ENCODE measurements at regions of chr14 and their contacts with region 1.

Region 1: DNA sequence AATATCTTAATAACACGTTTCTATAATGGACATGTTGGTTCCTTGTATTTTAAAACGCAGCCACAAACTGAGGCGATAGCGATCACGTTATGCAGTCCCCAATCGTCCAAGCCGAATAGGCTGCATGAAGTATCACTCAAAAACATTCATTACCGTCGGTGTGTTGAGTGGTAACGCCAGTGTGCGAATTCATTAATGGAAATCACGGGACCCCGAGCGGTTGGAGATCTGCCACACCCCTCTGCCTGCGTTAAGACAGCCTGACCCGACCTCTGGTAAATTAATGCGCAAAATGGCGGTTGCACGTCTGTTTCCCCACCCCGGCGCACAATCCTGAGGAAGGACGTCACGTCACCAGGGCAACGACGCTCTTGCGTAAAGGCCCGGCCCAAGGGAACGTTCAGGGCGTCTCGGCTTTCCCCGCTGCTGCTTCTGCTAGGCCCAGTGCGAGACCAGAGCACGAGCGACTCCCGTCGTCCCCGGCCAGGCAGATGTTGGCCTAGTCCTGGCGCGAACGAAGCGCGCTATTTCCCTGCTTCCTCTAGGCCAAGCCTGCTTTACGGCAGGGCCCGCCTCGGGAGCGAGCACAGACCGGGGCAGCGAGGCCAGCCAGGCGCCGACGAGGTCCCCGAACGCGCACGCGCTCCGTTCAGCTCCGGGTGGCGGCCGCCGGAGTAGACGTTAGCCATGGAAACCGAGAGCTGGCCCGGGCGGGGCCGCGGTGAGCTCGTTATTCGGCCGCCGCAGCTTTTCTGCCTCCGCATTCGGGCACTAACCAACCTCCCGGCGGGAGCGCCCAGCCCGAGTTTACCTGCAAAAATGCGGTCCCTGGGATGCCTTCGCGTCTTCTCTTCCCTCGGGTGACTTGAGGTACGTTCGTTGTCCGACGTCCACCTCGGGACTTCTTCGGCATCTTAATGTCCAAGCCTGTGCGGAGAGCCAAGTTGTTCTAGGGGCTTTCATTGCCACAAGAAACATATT is at the start of gene PCNX4:
- DNase-seq: peak; percentile 90
- H3K4me3 Mint-ChIP-seq: peak within 1 kb of the TSS; percentile 98
- H3K27ac Mint-ChIP-seq: peak within 1 kb of the TSS; percentile 98
- H3K4me1 Mint-ChIP-seq: peaks cover 34% of the 10 kb centered on the region
- H3K27me3 Mint-ChIP-seq: peaks cover 2% of the 10 kb centered on the region
- total RNA-seq, gene PCNX4: 41.6 and 46.7 TPM in 2 replicates

Region 2: DNA sequence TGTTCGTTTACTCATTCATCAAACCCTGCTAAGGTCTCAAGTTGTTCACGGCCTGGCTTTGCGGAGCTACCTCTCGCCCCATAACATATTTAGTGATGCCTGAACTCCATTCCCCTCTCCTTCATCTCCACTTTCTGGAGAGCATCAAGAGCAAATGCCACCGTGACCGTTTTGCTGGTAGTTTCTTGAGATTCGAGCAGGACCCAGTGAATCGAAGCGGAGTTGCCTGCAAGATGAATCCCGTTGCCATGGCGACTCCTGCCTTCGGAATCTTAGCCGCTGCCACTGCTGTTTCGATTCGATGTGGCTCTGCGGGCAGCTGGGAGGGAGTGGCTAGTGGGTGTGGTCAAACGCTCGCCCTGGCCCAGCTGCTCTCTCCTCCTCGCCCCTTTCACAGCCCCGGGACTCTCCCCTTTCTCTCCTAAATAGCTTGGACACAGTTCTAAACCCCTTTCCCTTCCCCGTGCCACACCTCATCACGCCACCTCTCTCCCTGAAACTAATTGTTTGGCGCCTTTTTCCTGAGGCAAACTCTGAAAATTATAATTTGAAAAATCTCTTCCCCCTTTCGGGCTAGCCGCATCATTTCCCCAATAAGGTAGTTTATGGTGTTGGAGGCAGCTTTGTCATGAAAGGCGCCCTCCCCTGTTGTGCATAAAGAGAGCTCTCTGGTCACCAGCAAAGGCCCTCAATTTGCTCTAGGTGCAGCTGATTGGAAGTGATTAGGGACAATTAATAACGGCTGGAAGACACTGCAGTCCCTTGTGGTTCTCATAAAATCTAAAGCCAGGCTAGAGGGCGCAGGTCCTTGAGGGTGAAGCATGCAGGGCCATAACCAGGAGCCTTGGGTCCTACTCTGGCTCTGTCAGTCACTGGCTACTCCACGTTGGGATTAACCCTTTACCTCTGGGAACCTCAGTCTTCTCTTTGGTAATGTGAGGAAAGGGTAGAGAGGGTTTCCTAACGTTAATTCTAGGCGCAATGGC is 901.8 kb before region 1 on chr14:
- intact Hi-C with region 1: loop called (anchors 5 kb)
- DNase-seq: peak; percentile 73
- H3K4me3 Mint-ChIP-seq: peak overlapping the region; percentile 96
- H3K27ac Mint-ChIP-seq: peak overlapping the region; percentile 87
- H3K4me1 Mint-ChIP-seq: peaks cover 11% of the 10 kb centered on the region
- H3K27me3 Mint-ChIP-seq: peaks cover 17% of the 10 kb centered on the region

Region 3: DNA sequence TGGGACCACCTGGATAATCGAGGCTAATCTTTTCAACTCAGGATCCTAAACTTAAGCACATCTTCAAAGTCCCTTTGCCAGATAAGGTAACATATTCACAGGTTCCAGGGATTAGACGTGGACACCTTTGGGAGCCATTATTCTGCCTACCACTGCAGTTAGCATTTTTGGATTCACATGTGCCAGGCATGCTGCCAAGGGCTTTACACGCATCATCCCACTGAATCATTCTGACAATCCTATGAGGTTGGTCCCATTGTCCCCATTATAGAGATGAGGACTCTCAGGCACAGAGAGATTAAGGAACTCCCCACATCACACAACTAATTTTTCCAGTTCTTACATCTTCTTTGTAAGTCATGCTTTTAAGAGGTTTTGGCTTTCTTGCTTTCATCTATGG is 255.7 kb before region 1 on chr14:
- intact Hi-C with region 1: no loop called
- DNase-seq: no peak
- H3K4me3 Mint-ChIP-seq: no peak overlapping the region
- H3K27ac Mint-ChIP-seq: no peak overlapping the region
- H3K4me1 Mint-ChIP-seq: no peaks in the 10 kb centered on the region
- H3K27me3 Mint-ChIP-seq: no peaks in the 10 kb centered on the region

Region 4: DNA sequence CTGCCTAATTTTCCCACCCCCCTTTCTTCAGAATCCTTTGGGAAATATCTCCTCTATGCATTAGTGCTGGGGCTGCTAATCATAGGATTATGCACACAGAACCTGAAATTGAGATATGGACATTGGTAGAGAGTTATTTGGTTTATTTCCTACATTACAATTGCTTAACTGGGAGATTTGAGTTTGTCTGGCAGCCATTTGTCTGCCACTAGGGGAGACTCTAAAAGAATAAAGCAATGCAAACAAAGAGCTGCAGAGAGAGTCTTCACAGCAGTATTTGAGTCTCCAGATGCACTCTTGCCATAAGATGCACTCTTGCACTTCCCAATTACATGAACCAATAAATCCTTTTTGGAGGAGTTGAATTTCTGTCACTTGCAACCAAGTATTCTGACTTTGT is 12.1 kb before region 1 on chr14:
- intact Hi-C with region 1: no loop called
- DNase-seq: no peak
- H3K4me3 Mint-ChIP-seq: no peak overlapping the region
- H3K27ac Mint-ChIP-seq: no peak overlapping the region
- H3K4me1 Mint-ChIP-seq: no peaks in the 10 kb centered on the region
- H3K27me3 Mint-ChIP-seq: peaks cover 22% of the 10 kb centered on the region

Region 5: GRCh38 chr14:60151715-60152114 is 59.9 kb after region 1 on chr14:
- intact Hi-C with region 1: loop called (anchors 1 kb)
- DNase-seq: peak; percentile 50
- H3K4me3 Mint-ChIP-seq: peak overlapping the region; percentile 26
- H3K27ac Mint-ChIP-seq: peak overlapping the region; percentile 87
- H3K4me1 Mint-ChIP-seq: peaks cover 42% of the 10 kb centered on the region
- H3K27me3 Mint-ChIP-seq: no peaks in the 10 kb centered on the region

Region 6: GRCh38 chr14:60248697-60249318 is 157.0 kb after region 1 on chr14 and contains the start of gene PPM1A:
- intact Hi-C with region 1: loop called (anchors 1 kb)
- DNase-seq: peak; percentile 90
- H3K4me3 Mint-ChIP-seq: peak within 1 kb of the TSS; percentile 96
- H3K27ac Mint-ChIP-seq: peak within 1 kb of the TSS; percentile 100
- H3K4me1 Mint-ChIP-seq: peaks cover 59% of the 10 kb centered on the region
- H3K27me3 Mint-ChIP-seq: no peaks in the 10 kb centered on the region
- total RNA-seq, gene PPM1A: 43.9 and 50.7 TPM in 2 replicates

Region 7: DNA sequence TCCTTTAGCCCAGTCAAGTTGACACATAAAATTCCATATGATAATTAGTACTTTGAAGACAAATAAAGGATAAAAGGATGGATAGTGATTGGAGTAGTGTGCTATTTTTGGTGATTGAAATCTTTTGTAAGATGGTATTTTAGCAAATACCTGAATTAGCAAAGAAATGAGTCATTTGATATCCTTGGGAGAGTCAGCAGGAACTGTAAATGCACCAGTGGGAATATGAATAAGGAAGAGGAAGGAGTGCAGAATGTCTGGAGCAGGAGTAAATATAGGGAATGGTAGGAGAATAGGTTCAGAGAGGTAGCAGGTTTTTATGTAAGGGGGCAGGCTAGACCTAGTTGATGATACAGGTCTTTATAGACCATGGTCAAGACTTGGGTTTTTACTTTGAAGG is 814.1 kb after region 1 on chr14:
- intact Hi-C with region 1: no loop called
- DNase-seq: no peak
- H3K4me3 Mint-ChIP-seq: no peak overlapping the region
- H3K27ac Mint-ChIP-seq: no peak overlapping the region
- H3K4me1 Mint-ChIP-seq: no peaks in the 10 kb centered on the region
- H3K27me3 Mint-ChIP-seq: no peaks in the 10 kb centered on the region

Region 8: GRCh38 chr14:60980811-60981632 is 889.2 kb after region 1 on chr14 and contains the starts of genes SLC38A6 and TRMT5:
- intact Hi-C with region 1: loop called (anchors 5 kb)
- DNase-seq: peak; percentile 88
- H3K4me3 Mint-ChIP-seq: no peak within 1 kb of the TSS
- H3K27ac Mint-ChIP-seq: no peak within 1 kb of the TSS
- H3K4me1 Mint-ChIP-seq: peaks cover 17% of the 10 kb centered on the region
- H3K27me3 Mint-ChIP-seq: no peaks in the 10 kb centered on the region
- total RNA-seq, gene SLC38A6: 4.5 and 4.7 TPM in 2 replicates
- total RNA-seq, gene TRMT5: 17.4 and 19.2 TPM in 2 replicates

Region 9: GRCh38 chr14:61761959-61762786 is 1670.3 kb after region 1 on chr14 and contains the start of gene SNAPC1:
- intact Hi-C with region 1: loop called (anchors 5 kb)
- DNase-seq: peak; percentile 97
- H3K4me3 Mint-ChIP-seq: peak within 1 kb of the TSS; percentile 91
- H3K27ac Mint-ChIP-seq: peak within 1 kb of the TSS; percentile 90
- H3K4me1 Mint-ChIP-seq: peaks cover 59% of the 10 kb centered on the region
- H3K27me3 Mint-ChIP-seq: peaks cover 3% of the 10 kb centered on the region
- total RNA-seq, gene SNAPC1: 10.8 and 11.0 TPM in 2 replicates